ENCODE measurements at regions of chrX and their contacts with region 1.

Region 1: GRCh38 chrX:48801280-48802088 is at the start of gene HDAC6:
- DNase-seq: peak; percentile 85
- ATAC-seq: peak; percentile 80
- H3K4me3 Mint-ChIP-seq: peak within 1 kb of the TSS; percentile 94
- H3K27ac Mint-ChIP-seq: peak within 1 kb of the TSS; percentile 98
- H3K4me1 Mint-ChIP-seq: peaks cover 18% of the 10 kb centered on the region
- H3K27me3 Mint-ChIP-seq: no peaks in the 10 kb centered on the region
- CTCF ChIP-seq: no peak
- total RNA-seq, gene HDAC6: 139 and 144 TPM in 2 replicates

Region 2: DNA sequence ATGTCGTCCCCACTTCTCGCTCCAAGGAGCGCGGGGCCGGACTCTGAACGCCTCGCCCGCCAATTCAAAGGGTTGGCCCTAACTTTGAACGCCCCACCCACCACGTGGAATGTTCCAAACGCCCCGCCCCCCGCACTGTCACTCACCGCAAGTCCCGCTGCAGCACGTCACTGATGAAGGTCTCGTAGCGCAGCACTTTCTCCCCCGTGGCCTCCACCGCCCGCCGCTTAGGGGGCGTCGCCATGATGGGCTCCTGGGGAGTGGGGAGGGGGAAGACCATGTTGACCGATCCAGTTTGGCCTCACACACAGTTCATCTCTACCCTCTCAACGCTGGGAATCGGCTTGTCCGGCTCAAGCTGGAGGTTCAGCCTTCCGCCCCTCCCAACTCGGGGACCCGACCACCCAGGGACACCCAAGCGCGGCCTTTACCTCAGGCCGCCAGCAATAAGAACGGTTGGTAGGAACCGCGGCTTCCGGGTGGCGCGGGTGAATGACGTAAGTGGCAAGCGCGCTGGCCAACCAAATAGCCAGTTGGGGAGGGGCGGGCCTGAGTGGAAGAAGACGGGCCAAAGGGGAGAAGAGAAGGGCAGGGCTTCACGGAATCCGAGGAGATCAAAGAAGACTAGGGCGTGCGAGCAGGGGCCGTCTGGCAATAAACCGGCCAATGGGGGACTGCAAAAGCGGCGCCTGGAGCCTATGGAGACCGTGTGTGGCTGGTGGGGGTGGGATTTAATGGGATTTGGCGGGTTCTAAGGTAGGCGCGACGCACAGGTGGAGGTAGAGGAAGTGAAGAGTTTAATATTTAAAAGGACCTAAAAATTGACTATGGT is 1142.6 kb before region 1 on chrX and contains the start of gene UXT:
- CTCF ChIA-PET with region 1: no interaction called
- POLR2A ChIA-PET with region 1: no interaction called
- intact Hi-C with region 1: loop called (anchors 2 kb)
- DNase-seq: peak; percentile 82
- ATAC-seq: peak; percentile 85
- H3K4me3 Mint-ChIP-seq: peak within 1 kb of the TSS; percentile 91
- H3K27ac Mint-ChIP-seq: peak within 1 kb of the TSS; percentile 99
- H3K4me1 Mint-ChIP-seq: peaks cover 18% of the 10 kb centered on the region
- H3K27me3 Mint-ChIP-seq: no peaks in the 10 kb centered on the region
- CTCF ChIP-seq: no peak
- total RNA-seq, gene UXT: 184 and 201 TPM in 2 replicates

Region 3: GRCh38 chrX:48574270-48575266 is 226.9 kb before region 1 on chrX and contains the start of gene RBM3:
- CTCF ChIA-PET with region 1: no interaction called
- POLR2A ChIA-PET with region 1: interaction called, 8 read pairs
- intact Hi-C with region 1: loop called (anchors 2 kb)
- DNase-seq: peak; percentile 74
- ATAC-seq: peak; percentile 94
- H3K4me3 Mint-ChIP-seq: peak within 1 kb of the TSS; percentile 99
- H3K27ac Mint-ChIP-seq: peak within 1 kb of the TSS; percentile 100
- H3K4me1 Mint-ChIP-seq: peaks cover 26% of the 10 kb centered on the region
- H3K27me3 Mint-ChIP-seq: no peaks in the 10 kb centered on the region
- CTCF ChIP-seq: no peak
- total RNA-seq, gene RBM3: 381 and 394 TPM in 2 replicates

Region 4: GRCh38 chrX:48676106-48676892 is 125.2 kb before region 1 on chrX:
- CTCF ChIA-PET with region 1: no interaction called
- POLR2A ChIA-PET with region 1: interaction called, 10 read pairs
- intact Hi-C with region 1: loop called (anchors 1 kb)
- DNase-seq: peak; percentile 79
- ATAC-seq: peak; percentile 94
- H3K4me3 Mint-ChIP-seq: peak overlapping the region; percentile 89
- H3K27ac Mint-ChIP-seq: peak overlapping the region; percentile 88
- H3K4me1 Mint-ChIP-seq: peaks cover 22% of the 10 kb centered on the region
- H3K27me3 Mint-ChIP-seq: no peaks in the 10 kb centered on the region
- CTCF ChIP-seq: no peak

Region 5: GRCh38 chrX:48897621-48898306 is 96.3 kb after region 1 on chrX and contains the starts of genes PQBP1 and TIMM17B:
- CTCF ChIA-PET with region 1: no interaction called
- POLR2A ChIA-PET with region 1: interaction called, 15 read pairs
- intact Hi-C with region 1: loop called (anchors 1 kb)
- DNase-seq: peak; percentile 73
- ATAC-seq: peak; percentile 86
- H3K4me3 Mint-ChIP-seq: peak within 1 kb of the TSS; percentile 94
- H3K27ac Mint-ChIP-seq: peak within 1 kb of the TSS; percentile 97
- H3K4me1 Mint-ChIP-seq: peaks cover 29% of the 10 kb centered on the region
- H3K27me3 Mint-ChIP-seq: no peaks in the 10 kb centered on the region
- CTCF ChIP-seq: no peak
- total RNA-seq, gene PQBP1: 81.6 and 91.5 TPM in 2 replicates
- total RNA-seq, gene TIMM17B: 47.8 and 52.6 TPM in 2 replicates

Region 6: GRCh38 chrX:49043220-49043986 is 241.9 kb after region 1 on chrX and contains the start of gene TFE3:
- CTCF ChIA-PET with region 1: no interaction called
- POLR2A ChIA-PET with region 1: interaction called, 5 read pairs
- intact Hi-C with region 1: loop called (anchors 1 kb)
- DNase-seq: peak; percentile 82
- ATAC-seq: peak; percentile 86
- H3K4me3 Mint-ChIP-seq: peak within 1 kb of the TSS; percentile 89
- H3K27ac Mint-ChIP-seq: peak within 1 kb of the TSS; percentile 85
- H3K4me1 Mint-ChIP-seq: peaks cover 33% of the 10 kb centered on the region
- H3K27me3 Mint-ChIP-seq: no peaks in the 10 kb centered on the region
- CTCF ChIP-seq: no peak
- total RNA-seq, gene TFE3: 31.1 and 33.3 TPM in 2 replicates

Measured in activated B cell treated with CpG ODN at 0.5 μM for 24 hours (primary cell).